RWPE1 (cell line): ENCODE measurements at regions of chr20 and their contacts with region 1.

Region 1: GRCh38 chr20:50200482-50201104 is 10.0 kb downstream of the CEBPB start:
- DNase-seq: no peak
- H3K27ac ChIP-seq: peak overlapping the region; percentile 24
- CTCF ChIP-seq: no peak

Region 2: GRCh38 chr20:50165684-50166554 is 34.7 kb before region 1 on chr20:
- CTCF ChIA-PET with region 1: no interaction called
- POLR2A ChIA-PET with region 1: no interaction called
- DNase-seq: peak; percentile 100
- H3K27ac ChIP-seq: peak overlapping the region; percentile 94
- CTCF ChIP-seq: no peak

Region 3: GRCh38 chr20:50230871-50231560 is 30.4 kb after region 1 on chr20:
- CTCF ChIA-PET with region 1: no interaction called
- POLR2A ChIA-PET with region 1: no interaction called
- DNase-seq: no peak
- H3K27ac ChIP-seq: no peak overlapping the region
- CTCF ChIP-seq: no peak

Region 4: DNA sequence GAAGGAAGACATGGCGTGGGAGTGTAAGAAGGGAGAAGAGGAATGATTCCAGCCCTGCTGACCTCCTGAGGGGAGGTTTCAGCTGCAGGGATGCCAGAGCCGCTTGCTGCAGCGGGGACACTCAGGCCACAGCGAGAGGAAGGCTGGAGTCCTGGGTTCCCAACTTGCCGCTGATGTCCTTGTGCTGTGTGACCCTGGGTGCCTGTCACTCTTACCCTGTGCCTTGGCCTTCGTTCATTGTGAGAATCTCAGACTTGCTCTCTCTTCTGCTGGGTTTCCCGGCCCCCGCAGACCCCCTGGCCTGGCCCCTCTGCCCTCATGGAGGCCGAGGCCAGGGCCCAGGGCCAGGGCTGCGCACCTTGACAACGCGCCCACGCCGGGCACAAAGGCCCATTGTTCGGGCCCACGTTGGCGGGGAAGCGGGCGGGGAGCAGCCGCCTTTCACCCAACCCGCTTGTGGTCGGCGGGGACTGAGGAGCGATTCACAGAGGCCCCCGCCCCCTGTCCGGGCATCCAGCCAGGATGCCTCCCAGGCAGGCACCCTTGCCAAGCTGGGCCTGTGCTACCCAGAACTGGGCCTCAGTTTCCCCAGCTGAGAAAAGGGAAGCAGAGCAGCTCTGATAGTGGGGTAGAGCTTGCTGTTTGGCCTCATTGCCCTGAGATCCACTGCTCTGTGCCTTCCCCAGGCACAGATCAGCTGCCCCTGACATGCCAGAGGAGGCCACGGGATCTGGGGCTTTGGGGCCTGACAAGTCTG is 42.4 kb after region 1 on chr20:
- CTCF ChIA-PET with region 1: no interaction called
- POLR2A ChIA-PET with region 1: interaction called, 13 read pairs
- DNase-seq: peak; percentile 79
- H3K27ac ChIP-seq: peak overlapping the region; percentile 2; the same call in 1 of the 2 replicates
- CTCF ChIP-seq: no peak

Region 5: DNA sequence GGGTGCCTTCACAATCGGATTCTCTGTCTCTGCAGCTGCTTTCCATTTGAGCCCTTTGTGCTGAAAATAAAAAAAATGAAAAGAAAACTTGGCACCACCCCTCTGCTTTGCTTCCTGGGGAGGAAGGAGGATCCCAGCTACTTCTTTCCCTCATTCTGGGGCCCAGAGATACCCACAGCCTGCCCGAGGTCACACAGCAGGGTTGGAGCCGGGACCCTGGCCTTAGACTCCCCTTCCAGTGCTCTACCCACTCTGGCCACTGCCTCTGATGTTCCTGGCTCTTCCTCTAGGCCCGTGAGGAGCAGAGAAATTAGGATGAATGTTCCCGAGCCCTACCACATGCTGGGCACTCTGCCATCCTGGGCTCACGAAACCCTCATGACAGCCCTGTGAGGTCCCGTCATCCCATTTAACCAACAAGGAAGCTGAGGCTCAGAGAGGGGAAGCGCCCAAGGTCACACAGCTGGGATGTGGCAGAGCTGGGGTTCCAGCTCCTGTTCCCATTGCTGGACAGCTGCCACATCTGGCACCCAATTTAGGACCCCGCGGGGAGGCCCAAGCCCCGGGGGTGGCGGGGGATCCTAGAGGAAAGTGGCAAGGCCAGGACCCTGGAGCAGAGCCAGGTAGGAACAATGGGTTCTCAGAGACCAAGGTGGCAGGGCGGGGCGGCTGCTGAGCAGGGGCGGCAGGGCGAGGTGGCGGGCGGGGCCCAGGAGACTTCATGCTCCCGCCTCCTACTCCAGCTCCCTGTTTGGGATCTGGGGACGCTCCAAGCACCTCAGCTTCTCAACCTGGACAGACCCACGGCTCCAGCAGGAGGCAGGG is 66.7 kb after region 1 on chr20:
- CTCF ChIA-PET with region 1: no interaction called
- POLR2A ChIA-PET with region 1: no interaction called
- DNase-seq: peak; percentile 78
- H3K27ac ChIP-seq: peak overlapping the region; percentile 72
- CTCF ChIP-seq: no peak